Transverse colon (tissue), 4 donors: ENCODE measurements at regions of chr14 and their contacts with region 1.

Region 1: GRCh38 chr14:92651106-92651757 is 97.2 kb downstream of the LGMN start:
- DNase-seq: peak; percentile 57
- H3K4me3 ChIP-seq: peak overlapping the region in 1 of 4 donors; percentile 34
- H3K27ac ChIP-seq: peak overlapping the region; percentile 83 to 92 (median 88)
- H3K4me1 ChIP-seq: peaks cover 24 to 45% (median 33%) of the 10 kb centered on the region in 4 donors
- H3K27me3 ChIP-seq: no peaks in the 10 kb centered on the region
- CTCF ChIP-seq: no peak
- EP300 ChIP-seq: no peak
- POLR2A ChIP-seq: no peak

Region 2: GRCh38 chr14:92513204-92513973 is 137.8 kb before region 1 on chr14 and contains the start of gene RIN3:
- in situ Hi-C with region 1: no loop called
- intact Hi-C with region 1: loop called (anchors 10 kb)
- DNase-seq: peak; percentile 61
- H3K4me3 ChIP-seq: peak within 1 kb of the TSS; percentile 46 to 84 (median 64)
- H3K27ac ChIP-seq: peak within 1 kb of the TSS; percentile 88 to 94 (median 92)
- H3K4me1 ChIP-seq: peaks cover 9 to 51% (median 26%) of the 10 kb centered on the region in 4 donors
- H3K27me3 ChIP-seq: no peaks in the 10 kb centered on the region
- CTCF ChIP-seq: no peak
- EP300 ChIP-seq: no peak
- POLR2A ChIP-seq: peak; percentile 49
- total RNA-seq, gene RIN3: 16.2 to 24.3 (median 20.7) TPM

Region 3: GRCh38 chr14:92603309-92604242 is 47.7 kb before region 1 on chr14:
- in situ Hi-C with region 1: no loop called
- intact Hi-C with region 1: loop called (anchors 2 kb)
- DNase-seq: peak; percentile 43
- H3K4me3 ChIP-seq: no peak overlapping the region
- H3K27ac ChIP-seq: peak overlapping the region; percentile 72 to 80 (median 79)
- H3K4me1 ChIP-seq: peaks cover 10 to 37% (median 26%) of the 10 kb centered on the region in 4 donors
- H3K27me3 ChIP-seq: no peaks in the 10 kb centered on the region
- CTCF ChIP-seq: peak in 3 of 5 experiments; percentile 8 to 27 (median 23)
- EP300 ChIP-seq: no peak
- POLR2A ChIP-seq: no peak

Region 4: DNA sequence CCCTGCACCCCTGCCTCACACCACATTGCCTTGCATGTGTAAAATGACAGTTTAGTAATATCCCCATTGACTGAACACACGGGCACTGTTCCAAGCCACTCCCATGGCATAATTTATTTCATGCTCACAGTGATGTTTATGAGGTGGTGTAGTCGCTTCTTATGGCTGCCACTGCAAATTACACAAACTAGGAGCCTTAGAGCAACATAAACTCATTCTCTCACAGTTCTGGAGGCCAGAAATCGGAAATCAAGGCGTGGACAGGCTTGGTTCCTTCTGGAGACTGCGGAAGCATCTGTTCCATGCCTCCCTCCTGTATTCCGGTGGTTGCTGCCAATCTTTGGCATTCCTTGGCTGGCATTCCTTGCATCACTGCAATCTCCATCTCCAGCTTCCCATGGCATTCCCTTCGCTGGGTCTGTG is 40.4 kb before region 1 on chr14:
- in situ Hi-C with region 1: no loop called
- intact Hi-C with region 1: loop called (anchors 2 kb)
- DNase-seq: peak; percentile 80
- H3K4me3 ChIP-seq: no peak overlapping the region
- H3K27ac ChIP-seq: peak overlapping the region; percentile 58 to 80 (median 74)
- H3K4me1 ChIP-seq: peaks cover 13 to 39% (median 31%) of the 10 kb centered on the region in 4 donors
- H3K27me3 ChIP-seq: no peaks in the 10 kb centered on the region
- CTCF ChIP-seq: no peak
- EP300 ChIP-seq: no peak
- POLR2A ChIP-seq: no peak

Region 5: GRCh38 chr14:92637228-92637627 is 14.0 kb before region 1 on chr14:
- in situ Hi-C with region 1: no loop called
- intact Hi-C with region 1: no loop called
- DNase-seq: no peak
- H3K4me3 ChIP-seq: no peak overlapping the region
- H3K27ac ChIP-seq: no peak overlapping the region
- H3K4me1 ChIP-seq: peaks cover 0 to 8% (median 0%) of the 10 kb centered on the region in 4 donors
- H3K27me3 ChIP-seq: no peaks in the 10 kb centered on the region
- CTCF ChIP-seq: no peak
- EP300 ChIP-seq: no peak
- POLR2A ChIP-seq: no peak

Region 6: GRCh38 chr14:93967637-93968250 is 1316.5 kb after region 1 on chr14:
- in situ Hi-C with region 1: no loop called
- intact Hi-C with region 1: loop called (anchors 5 kb)
- DNase-seq: peak; percentile 31
- H3K4me3 ChIP-seq: no peak overlapping the region
- H3K27ac ChIP-seq: peak overlapping the region; percentile 1 to 91 (median 56)
- H3K4me1 ChIP-seq: peaks cover 13 to 56% (median 33%) of the 10 kb centered on the region in 4 donors
- H3K27me3 ChIP-seq: no peaks in the 10 kb centered on the region
- CTCF ChIP-seq: no peak
- EP300 ChIP-seq: no peak
- POLR2A ChIP-seq: no peak